ENCODE measurements at regions of chr2 and their contacts with region 1.

Region 1: DNA sequence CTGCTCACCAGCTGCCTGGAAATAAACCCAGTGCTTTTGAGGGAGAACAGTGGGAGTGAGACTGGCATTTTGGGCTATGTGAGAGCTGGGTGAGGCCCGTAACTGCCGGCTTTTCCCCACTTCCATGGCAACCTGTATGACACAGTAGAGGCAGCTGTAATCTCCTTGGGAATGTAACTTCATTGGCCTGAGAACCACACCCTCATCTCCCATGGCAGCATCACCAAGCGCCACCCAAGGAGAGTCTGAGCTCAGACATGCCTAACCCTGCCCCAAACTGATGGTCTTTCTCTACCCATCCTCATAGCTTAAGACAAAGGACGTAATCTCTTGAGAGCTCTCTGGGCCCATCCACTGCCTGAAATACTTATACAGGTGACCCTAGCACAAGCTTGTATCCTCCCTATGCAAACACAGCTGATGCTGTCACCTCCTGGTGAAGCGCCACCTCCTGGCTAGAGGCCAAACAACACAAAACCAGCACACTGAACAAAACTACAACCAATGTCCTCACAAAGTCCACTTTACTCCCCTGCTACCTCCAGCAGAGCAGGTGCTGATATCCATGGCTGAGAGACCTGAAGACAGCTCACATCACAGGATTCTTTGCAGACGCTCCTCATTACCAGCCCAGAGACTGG is 763.4 kb upstream of the NRXN1 start:
- DNase-seq: peak; percentile 46
- H3K4me3 ChIP-seq: no peak overlapping the region
- H3K27ac ChIP-seq: no peak overlapping the region
- H3K4me1 ChIP-seq: no peaks in the 10 kb centered on the region
- H3K27me3 ChIP-seq: no peaks in the 10 kb centered on the region
- CTCF ChIP-seq: peak; percentile 67

Region 2: DNA sequence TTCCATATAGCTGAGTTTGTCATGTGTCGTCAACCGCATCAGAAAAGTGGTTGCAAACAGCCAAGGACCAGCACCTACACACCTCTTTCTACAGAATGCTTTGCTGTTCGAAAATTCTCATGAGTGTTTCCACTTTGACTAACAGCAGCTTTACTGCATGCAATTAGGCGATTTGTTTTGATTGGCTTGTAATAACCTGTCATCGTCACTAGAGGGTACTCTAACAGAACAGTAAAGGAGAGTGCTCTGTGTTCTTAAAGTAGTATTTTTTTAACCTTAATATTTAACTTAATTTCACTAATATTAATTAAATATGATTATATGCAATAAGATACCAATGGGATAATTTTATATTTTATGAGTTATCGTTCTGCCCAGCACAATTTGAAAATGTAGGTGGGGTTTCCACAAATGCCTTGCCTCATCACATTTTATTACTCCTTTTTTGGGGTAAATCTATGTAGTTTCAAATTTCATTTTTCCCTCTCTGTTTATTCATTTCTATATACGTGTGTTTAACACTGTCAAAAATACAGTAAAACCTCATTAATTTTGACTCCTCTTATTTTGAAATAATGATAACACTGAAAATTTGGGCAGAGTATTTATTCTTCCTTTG is 1265.7 kb before region 1 on chr2:
- CTCF ChIA-PET with region 1: no interaction called
- POLR2A ChIA-PET with region 1: no interaction called
- intact Hi-C with region 1: loop called (anchors 10 kb)
- DNase-seq: peak; percentile 48
- H3K4me3 ChIP-seq: no peak overlapping the region
- H3K27ac ChIP-seq: no peak overlapping the region
- H3K4me1 ChIP-seq: no peaks in the 10 kb centered on the region
- H3K27me3 ChIP-seq: peaks cover 72% of the 10 kb centered on the region
- CTCF ChIP-seq: peak; percentile 73

Region 3: GRCh38 chr2:50746526-50746925 is 1048.8 kb before region 1 on chr2:
- CTCF ChIA-PET with region 1: no interaction called
- POLR2A ChIA-PET with region 1: no interaction called
- intact Hi-C with region 1: loop called (anchors 10 kb)
- DNase-seq: peak; percentile 62
- H3K4me3 ChIP-seq: no peak overlapping the region
- H3K27ac ChIP-seq: no peak overlapping the region
- H3K4me1 ChIP-seq: no peaks in the 10 kb centered on the region
- H3K27me3 ChIP-seq: peaks cover 29% of the 10 kb centered on the region
- CTCF ChIP-seq: peak; percentile 81

Region 4: DNA sequence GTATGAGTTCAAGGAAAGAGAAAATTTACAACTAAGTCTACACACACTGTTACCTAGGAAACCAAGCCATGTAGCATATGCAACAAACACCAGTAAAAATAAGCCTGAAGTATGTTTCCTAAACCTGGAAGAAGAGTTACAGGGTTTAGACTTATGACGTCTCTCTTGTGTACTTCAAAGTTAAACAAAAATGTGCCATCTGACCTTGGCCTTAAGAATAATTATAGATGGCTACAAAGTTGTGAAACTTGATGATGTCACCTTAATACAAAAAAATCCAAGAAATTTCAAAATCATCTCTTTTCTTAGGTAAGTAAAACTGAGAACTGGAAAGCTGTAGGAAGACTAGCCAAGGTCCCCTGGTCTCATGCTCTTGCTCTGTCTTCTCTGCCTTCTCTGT is 465.8 kb before region 1 on chr2:
- CTCF ChIA-PET with region 1: no interaction called
- POLR2A ChIA-PET with region 1: no interaction called
- intact Hi-C with region 1: no loop called
- DNase-seq: no peak
- H3K4me3 ChIP-seq: no peak overlapping the region
- H3K27ac ChIP-seq: no peak overlapping the region
- H3K4me1 ChIP-seq: no peaks in the 10 kb centered on the region
- H3K27me3 ChIP-seq: no peaks in the 10 kb centered on the region
- CTCF ChIP-seq: no peak

Measured in A673 (cell line).